HepG2 (cell line): ENCODE measurements at regions of chr11 and their contacts with region 1.

Region 1: GRCh38 chr11:122367809-122368231 is 251.8 kb upstream of the BLID start:
- DNase-seq: peak; percentile 76
- ATAC-seq: peak; percentile 99
- H3K4me3 ChIP-seq: peak overlapping the region in 1 of 3 experiments; percentile 5; a peak in 1 of 6 replicates
- H3K27ac ChIP-seq: peak overlapping the region; percentile 26
- H3K4me1 ChIP-seq: peaks cover 18% of the 10 kb centered on the region
- H3K27me3 ChIP-seq: no peaks in the 10 kb centered on the region
- CTCF ChIP-seq: no peak
- EP300 ChIP-seq: no peak
- POLR2A ChIP-seq: no peak
- RAD21 ChIP-seq: no peak

Region 2: DNA sequence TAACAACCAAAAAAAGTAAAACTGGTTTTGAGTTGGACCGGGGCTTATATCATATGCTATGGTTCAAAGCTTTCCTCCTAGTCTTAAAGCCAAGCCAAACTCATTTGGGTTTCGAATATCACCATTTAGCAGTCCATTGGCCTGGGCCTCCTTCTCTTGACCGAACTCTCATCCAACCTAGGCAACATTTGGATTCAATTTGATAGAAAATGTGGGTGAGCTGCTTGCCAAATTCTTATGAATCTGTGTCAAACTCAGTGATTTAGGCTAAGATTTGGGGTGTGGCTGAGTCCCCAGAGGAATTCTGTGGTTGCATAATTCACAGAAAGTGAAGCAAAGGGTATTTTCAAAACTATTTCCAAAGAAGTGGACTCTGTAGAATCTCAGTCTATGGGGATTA is 335.5 kb before region 1 on chr11:
- CTCF ChIA-PET with region 1: no interaction called
- POLR2A ChIA-PET with region 1: no interaction called
- in situ Hi-C with region 1: no loop called
- intact Hi-C with region 1: no loop called
- DNase-seq: no peak
- ATAC-seq: no peak
- H3K4me3 ChIP-seq: no peak overlapping the region
- H3K27ac ChIP-seq: no peak overlapping the region
- H3K4me1 ChIP-seq: no peaks in the 10 kb centered on the region
- H3K27me3 ChIP-seq: no peaks in the 10 kb centered on the region
- CTCF ChIP-seq: no peak
- EP300 ChIP-seq: no peak
- POLR2A ChIP-seq: no peak
- RAD21 ChIP-seq: no peak

Region 3: DNA sequence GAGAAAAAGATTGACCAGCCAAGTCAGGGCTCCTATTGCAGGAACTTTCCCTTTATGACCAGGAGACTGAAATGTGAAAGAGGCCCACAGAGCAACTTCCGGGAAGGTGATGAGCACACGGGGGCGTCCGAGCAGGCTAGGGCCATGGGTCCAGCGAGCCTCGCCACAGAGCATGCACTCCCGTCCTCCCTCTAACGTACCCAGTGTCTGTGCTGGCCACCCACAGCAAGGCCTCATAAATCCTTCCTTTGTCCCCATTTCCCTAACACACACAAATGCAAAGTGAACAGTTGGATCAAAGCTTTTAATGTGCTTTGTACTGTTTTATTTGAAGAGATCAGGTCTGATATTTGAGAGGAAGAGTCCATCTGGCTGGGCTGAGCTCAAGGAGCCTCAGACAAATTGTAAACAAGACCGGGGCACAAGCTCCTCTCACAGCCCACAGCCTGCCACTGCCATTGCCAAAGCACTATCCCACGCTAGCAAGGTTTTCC is 296.1 kb before region 1 on chr11:
- CTCF ChIA-PET with region 1: no interaction called
- POLR2A ChIA-PET with region 1: no interaction called
- in situ Hi-C with region 1: no loop called
- intact Hi-C with region 1: no loop called
- DNase-seq: no peak
- ATAC-seq: peak; percentile 57; the same call in 2 of the 3 replicates
- H3K4me3 ChIP-seq: no peak overlapping the region
- H3K27ac ChIP-seq: no peak overlapping the region
- H3K4me1 ChIP-seq: no peaks in the 10 kb centered on the region
- H3K27me3 ChIP-seq: no peaks in the 10 kb centered on the region
- CTCF ChIP-seq: no peak
- EP300 ChIP-seq: no peak
- POLR2A ChIP-seq: no peak
- RAD21 ChIP-seq: no peak

Region 4: GRCh38 chr11:122146475-122146874 is 221.3 kb before region 1 on chr11:
- CTCF ChIA-PET with region 1: no interaction called
- POLR2A ChIA-PET with region 1: no interaction called
- in situ Hi-C with region 1: no loop called
- intact Hi-C with region 1: no loop called
- DNase-seq: no peak
- ATAC-seq: no peak
- H3K4me3 ChIP-seq: no peak overlapping the region
- H3K27ac ChIP-seq: no peak overlapping the region
- H3K4me1 ChIP-seq: 0 out of 2 replicates have a peak, but pooled peaks cover 7% of the 10 kb centered on the region
- H3K27me3 ChIP-seq: no peaks in the 10 kb centered on the region; a peak in 1 of 5 replicates
- CTCF ChIP-seq: no peak
- EP300 ChIP-seq: no peak
- POLR2A ChIP-seq: no peak
- RAD21 ChIP-seq: no peak

Region 5: GRCh38 chr11:122215244-122215992 is 152.4 kb before region 1 on chr11:
- CTCF ChIA-PET with region 1: no interaction called
- POLR2A ChIA-PET with region 1: no interaction called
- in situ Hi-C with region 1: no loop called
- intact Hi-C with region 1: loop called (anchors 10 kb)
- DNase-seq: peak; percentile 29
- ATAC-seq: peak; percentile 98
- H3K4me3 ChIP-seq: no peak overlapping the region
- H3K27ac ChIP-seq: no peak overlapping the region
- H3K4me1 ChIP-seq: peaks cover 3% of the 10 kb centered on the region
- H3K27me3 ChIP-seq: no peaks in the 10 kb centered on the region
- CTCF ChIP-seq: peak; percentile 91
- EP300 ChIP-seq: no peak
- POLR2A ChIP-seq: no peak
- RAD21 ChIP-seq: peak; percentile 85

Region 6: GRCh38 chr11:122330279-122330965 is 37.4 kb before region 1 on chr11:
- CTCF ChIA-PET with region 1: no interaction called
- POLR2A ChIA-PET with region 1: no interaction called
- in situ Hi-C with region 1: no loop called
- intact Hi-C with region 1: no loop called
- DNase-seq: no peak
- ATAC-seq: no peak
- H3K4me3 ChIP-seq: no peak overlapping the region
- H3K27ac ChIP-seq: no peak overlapping the region
- H3K4me1 ChIP-seq: no peaks in the 10 kb centered on the region
- H3K27me3 ChIP-seq: no peaks in the 10 kb centered on the region
- CTCF ChIP-seq: no peak
- EP300 ChIP-seq: no peak
- POLR2A ChIP-seq: no peak
- RAD21 ChIP-seq: no peak

Region 7: DNA sequence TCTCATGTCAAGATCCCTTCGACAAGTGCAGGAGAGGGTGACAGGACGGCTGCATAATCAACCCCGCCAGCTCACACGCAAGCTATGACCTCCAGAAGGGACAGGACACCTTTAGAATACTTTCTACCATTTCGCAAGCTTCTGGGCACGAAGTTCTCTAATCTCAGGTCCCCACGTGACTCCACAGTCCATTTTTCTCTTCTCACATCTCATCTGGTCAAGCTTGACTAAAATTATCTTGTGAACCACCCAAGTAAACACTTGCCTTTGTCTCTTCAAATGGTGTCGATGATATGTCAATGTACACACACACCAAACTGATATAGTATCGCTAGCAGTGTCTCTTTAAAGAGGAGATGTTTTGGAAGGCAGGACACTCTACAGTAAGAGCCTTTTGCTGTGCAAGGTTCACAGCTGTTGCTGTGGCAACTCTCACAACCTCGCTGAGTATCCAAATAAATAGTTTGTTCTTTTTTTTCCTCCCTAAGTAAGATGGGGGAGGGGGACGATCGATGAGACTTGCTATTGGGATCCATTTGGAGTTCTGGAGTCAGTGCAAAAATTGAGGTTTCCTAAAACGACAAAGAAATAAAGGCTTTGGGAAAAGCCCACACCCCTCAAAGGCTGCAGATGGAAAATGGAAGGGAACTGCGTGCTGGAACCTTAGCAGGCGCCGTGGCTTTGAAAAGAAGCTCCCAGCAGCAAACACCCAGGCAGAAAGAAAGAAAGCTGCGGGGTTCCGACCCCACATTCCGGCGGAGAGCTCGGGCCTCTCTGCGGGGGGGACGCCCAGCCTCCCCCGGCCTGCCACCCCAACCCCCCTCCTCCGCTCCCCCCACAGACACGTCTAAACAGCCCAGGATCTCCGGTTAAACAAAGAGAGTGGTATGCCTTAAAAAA is 72.3 kb after region 1 on chr11:
- CTCF ChIA-PET with region 1: no interaction called
- POLR2A ChIA-PET with region 1: no interaction called
- in situ Hi-C with region 1: no loop called
- intact Hi-C with region 1: loop called (anchors 5 kb)
- DNase-seq: peak; percentile 83
- ATAC-seq: peak; percentile 97
- H3K4me3 ChIP-seq: peak overlapping the region; percentile 33 to 59 (median 41); a peak in 5 of 6 replicates
- H3K27ac ChIP-seq: peak overlapping the region; percentile 83
- H3K4me1 ChIP-seq: peaks cover 27% of the 10 kb centered on the region
- H3K27me3 ChIP-seq: no peaks in the 10 kb centered on the region
- CTCF ChIP-seq: no peak
- EP300 ChIP-seq: peak; percentile 44 to 60; a peak in 3 of 4 replicates
- POLR2A ChIP-seq: peak in 1 of 2 experiments; percentile 45; a peak in 1 of 4 replicates
- RAD21 ChIP-seq: no peak